ENCODE measurements at regions of chr14 and their contacts with region 1.

Region 1: DNA sequence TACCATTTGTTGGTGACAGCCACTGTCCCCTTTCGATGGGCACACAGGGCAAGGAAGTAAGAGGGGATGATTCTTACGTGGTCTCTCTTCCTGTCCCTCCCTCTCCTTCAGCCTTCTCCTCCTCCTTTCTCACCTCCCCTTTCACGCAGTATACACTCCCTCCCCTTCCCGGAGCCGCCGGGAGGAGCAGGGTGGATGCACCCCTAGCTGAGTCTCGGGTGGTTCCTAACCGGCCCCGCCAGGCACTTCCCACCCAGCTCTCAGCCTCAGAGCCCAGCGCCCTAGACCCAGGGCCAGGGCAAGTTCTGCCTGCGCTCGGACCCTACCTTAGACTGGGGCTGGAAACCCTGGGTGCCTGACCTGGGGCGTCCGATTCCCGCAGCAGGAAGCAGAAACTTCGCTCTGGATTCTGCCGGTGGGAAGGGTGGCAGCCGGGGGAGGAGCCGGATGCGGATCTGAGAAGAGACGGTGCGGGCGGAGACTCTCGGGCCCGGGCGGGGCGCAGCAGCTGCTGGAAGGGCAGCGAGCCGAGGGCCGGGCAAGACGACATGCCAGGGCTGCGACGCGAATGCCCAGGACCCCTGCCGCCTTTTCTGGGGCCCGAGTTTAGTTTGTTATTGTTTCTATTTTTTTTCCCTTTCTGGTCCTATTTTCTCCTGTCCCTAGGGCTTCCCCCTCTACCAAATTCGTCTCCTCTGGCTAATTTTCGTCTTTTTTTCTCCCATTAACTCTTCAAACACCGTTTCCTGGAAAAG is at the start of gene TEP1:
- DNase-seq: peak; percentile 29
- H3K4me3 ChIP-seq: peak within 1 kb of the TSS; percentile 88
- H3K27ac ChIP-seq: peak within 1 kb of the TSS; percentile 94
- H3K27me3 ChIP-seq: no peaks in the 10 kb centered on the region
- CTCF ChIP-seq: no peak
- polyA plus RNA-seq, gene TEP1: 18.6 and 18.8 TPM in 2 replicates

Region 2: GRCh38 chr14:20007497-20007896 is 405.7 kb before region 1 on chr14:
- CTCF ChIA-PET with region 1: no interaction called
- POLR2A ChIA-PET with region 1: no interaction called
- DNase-seq: no peak
- H3K4me3 ChIP-seq: no peak overlapping the region
- H3K27ac ChIP-seq: no peak overlapping the region
- H3K27me3 ChIP-seq: no peaks in the 10 kb centered on the region
- CTCF ChIP-seq: no peak

Region 3: DNA sequence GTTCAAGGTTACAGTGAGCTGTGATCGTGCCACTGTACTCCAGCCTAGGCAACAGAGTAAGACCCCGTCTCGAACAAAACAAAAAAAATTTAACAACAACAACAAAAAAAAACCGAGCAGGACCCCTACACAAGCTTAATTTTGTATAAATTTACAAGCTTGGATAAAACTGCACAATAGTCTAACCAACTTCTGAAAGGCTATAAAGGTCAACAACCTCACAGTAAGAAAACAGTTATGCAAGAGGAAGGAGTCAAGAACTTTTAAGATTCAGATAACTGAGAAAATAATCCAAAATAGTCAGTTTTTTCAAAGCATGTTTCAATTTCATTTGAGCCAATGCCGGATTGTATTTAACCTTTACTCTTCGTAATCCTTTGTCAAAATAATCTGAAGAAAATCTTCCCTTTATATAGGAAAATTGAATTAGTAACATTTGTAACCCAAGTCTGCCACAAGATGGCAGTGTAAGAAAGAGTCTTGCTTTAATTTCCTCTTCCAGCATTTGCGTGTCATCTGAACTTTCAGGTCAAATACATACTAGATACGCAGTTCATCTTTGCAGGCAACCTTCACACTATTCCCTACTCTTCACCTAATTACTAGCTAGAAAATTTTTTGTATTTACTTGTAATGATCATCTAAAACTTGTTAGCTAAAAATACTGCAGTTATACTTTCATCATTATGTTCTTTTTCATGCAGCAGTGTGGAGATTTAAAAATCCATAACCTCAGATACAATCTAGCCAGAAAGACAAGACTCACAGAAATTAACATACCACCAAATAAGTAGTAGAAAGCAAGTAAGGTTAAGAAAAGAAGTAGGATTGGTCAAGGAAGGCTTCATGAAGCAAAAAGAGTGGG is 86.0 kb before region 1 on chr14:
- CTCF ChIA-PET with region 1: interaction called, 37 read pairs
- POLR2A ChIA-PET with region 1: no interaction called
- DNase-seq: peak; percentile 54
- H3K4me3 ChIP-seq: no peak overlapping the region
- H3K27ac ChIP-seq: no peak overlapping the region
- H3K27me3 ChIP-seq: no peaks in the 10 kb centered on the region
- CTCF ChIP-seq: peak; percentile 72

Region 4: DNA sequence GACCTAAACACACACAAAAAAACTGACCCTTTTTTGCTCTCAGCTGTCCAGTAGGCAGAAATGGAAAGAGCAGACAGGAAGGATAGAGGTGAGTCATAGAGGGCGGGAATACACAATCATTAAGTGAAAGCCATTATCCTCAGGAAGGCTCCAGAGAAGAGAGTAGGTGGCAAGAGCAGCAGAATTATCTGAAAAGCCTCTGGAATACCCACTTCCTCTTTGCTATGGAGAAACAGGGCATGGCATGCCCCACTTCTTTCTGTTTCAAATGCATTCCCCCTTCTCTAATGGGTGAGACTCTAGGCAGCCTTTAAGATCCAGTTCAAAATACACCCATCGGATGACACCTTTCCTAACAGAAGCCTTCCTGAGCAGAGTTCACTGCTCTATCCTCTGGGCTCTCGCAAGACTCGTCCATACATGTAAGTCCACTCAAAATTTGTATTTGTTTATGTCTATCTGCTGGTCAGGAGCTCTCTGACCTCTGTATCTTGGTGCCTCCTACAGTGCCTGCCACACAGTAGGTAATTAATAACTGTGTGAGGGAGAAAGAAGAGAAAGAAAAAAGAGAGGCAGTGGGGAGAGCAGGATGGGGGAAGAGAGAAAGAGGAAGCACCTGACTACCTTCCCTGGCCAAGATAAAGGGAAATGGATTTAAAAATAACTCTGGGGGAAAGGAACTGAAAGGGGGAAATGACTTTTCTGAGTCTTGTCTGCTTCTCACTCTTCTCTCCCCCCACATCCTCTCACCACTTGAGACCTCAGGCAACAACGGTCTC is 14.2 kb after region 1 on chr14:
- CTCF ChIA-PET with region 1: interaction called, 45 read pairs
- POLR2A ChIA-PET with region 1: no interaction called
- DNase-seq: peak; percentile 16
- H3K4me3 ChIP-seq: no peak overlapping the region
- H3K27ac ChIP-seq: no peak overlapping the region
- H3K27me3 ChIP-seq: no peaks in the 10 kb centered on the region
- CTCF ChIP-seq: no peak

Region 5: DNA sequence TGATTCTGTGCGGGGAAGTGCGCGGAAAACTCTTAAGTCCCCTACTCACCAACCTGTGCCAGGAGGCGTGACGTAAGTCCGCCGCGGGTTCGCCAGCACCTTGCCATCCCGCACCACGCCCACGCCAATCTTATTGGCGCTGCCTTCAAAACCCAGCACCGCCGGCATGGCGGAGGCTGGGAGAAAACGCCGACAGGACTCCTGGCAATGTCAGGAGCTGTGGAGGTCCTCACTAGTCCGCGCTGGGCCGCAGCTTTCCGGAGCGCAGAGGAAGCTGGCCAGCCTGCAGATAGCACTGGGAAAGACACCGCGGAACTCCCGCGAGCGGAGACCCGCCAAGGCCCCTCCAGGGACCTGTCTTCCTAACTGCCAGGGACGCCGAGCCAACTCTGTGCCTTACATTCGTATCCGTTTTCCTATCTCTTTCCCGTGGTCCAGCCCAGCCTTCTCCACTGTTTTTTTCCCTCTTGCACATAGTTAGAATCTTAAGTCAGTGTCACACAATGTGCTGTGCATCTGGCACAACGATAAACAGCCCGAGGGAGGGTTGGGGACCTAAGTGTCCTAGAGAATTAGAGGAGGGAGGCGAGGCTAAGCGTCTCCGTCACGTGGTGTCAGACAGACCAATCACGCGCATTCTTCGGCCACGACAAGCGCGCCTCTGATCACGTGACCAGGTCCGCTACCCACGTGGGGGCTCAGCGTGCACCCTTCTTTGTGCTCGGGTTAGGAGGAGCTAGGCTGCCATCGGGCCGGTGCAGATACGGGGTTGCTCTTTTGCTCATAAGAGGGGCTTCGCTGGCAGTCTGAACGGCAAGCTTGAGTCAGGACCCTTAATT is 41.5 kb after region 1 on chr14 and contains the starts of genes APEX1 and OSGEP:
- CTCF ChIA-PET with region 1: interaction called, 30 read pairs
- POLR2A ChIA-PET with region 1: interaction called, 10 read pairs
- DNase-seq: peak; percentile 98
- H3K4me3 ChIP-seq: peak within 1 kb of the TSS; percentile 91
- H3K27ac ChIP-seq: peak within 1 kb of the TSS; percentile 99
- H3K27me3 ChIP-seq: no peaks in the 10 kb centered on the region
- CTCF ChIP-seq: no peak
- polyA plus RNA-seq, gene APEX1: 240 and 274 TPM in 2 replicates
- polyA plus RNA-seq, gene OSGEP: 23.6 and 29.2 TPM in 2 replicates

Region 6: DNA sequence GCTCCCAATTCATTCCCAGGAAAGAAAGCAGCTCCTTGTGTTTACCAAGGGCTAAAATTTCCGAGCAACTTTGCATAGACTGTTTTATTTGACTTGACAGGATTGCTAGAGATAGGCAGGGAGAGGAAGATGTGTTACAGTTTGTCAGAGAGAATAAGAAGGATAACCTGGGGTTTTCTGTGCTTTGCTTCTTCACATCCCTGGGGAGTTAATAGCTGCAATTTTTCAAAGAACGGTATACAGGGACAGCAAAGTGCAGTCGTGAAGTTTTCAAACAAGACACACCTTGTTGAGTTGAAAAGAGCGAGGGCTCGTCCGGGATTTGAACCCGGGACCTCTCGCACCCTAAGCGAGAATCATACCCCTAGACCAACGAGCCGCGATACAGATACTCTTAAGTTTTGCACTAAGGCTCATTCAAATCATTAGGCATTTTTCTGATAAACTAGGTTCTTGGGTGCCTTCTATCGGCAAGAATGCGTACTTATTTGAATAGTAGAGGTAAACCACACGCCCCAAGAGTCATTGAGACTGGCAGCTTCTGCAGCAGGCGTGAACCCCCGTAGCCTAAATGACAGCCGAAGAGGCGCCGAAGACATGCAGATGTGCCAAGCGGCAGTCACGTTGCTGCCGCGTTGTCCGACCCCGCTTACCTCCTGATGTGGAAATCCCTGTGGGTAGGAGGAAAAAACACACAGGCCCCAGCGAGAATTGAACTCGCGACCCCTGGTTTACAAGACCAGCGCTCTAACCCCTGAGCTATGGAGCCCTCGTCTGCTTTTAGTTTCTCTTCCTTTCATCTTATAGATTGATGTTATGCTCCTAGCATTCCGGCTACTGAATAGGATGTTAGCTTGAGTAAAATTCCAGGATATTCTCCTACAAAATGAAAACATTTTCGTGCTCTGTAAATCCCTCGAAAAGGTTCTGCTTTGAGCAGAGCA is 200.1 kb after region 1 on chr14:
- CTCF ChIA-PET with region 1: interaction called, 58 read pairs
- POLR2A ChIA-PET with region 1: interaction called, 3 read pairs
- DNase-seq: peak; percentile 97
- H3K4me3 ChIP-seq: peak overlapping the region; percentile 70
- H3K27ac ChIP-seq: peak overlapping the region; percentile 42
- H3K27me3 ChIP-seq: no peaks in the 10 kb centered on the region
- CTCF ChIP-seq: peak; percentile 76

Region 7: GRCh38 chr14:20757965-20758364 is 344.7 kb after region 1 on chr14:
- CTCF ChIA-PET with region 1: no interaction called
- POLR2A ChIA-PET with region 1: no interaction called
- DNase-seq: no peak
- H3K4me3 ChIP-seq: no peak overlapping the region
- H3K27ac ChIP-seq: no peak overlapping the region
- H3K27me3 ChIP-seq: no peaks in the 10 kb centered on the region
- CTCF ChIP-seq: no peak